Activated CD4-positive, alpha-beta memory T cell treated with anti-CD3 and anti-CD28 coated beads for 36 hours (primary cell): ENCODE measurements at regions of chr7 and their contacts with region 1.

Region 1: DNA sequence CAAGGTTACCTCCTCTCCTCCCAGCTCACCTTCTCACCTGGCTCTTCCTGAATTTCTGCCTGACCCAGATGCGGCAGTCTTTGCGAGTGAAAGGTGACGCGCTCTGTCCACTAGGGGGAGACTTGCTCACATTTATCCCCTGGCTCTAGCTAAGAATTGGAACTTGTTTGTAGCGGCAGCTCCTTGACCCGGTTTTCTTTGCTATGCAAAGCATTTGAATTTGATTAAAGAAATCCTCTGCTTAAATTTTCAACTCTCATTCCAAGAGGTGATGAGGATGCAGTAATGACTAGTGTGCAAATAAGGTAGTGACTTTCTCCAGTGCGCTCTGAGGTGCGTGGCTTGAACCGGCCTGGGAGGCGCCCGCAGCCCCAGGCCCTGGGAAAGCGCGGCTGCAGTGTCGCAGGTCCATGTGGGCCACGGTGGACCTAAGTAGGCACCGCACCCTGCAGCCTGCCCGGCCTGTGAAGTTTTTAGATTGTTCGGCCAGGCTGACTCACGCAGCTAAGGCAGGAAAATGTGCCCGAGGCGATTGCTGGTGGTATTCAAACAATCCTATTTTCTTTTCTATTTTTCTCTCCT is 336.9 kb upstream of the NPSR1 start:
- DNase-seq: peak; percentile 63
- H3K4me3 Mint-ChIP-seq: no peak overlapping the region
- H3K27ac Mint-ChIP-seq: no peak overlapping the region
- H3K4me1 Mint-ChIP-seq: peaks cover 2% of the 10 kb centered on the region
- H3K27me3 Mint-ChIP-seq: peaks cover 17% of the 10 kb centered on the region

Region 2: DNA sequence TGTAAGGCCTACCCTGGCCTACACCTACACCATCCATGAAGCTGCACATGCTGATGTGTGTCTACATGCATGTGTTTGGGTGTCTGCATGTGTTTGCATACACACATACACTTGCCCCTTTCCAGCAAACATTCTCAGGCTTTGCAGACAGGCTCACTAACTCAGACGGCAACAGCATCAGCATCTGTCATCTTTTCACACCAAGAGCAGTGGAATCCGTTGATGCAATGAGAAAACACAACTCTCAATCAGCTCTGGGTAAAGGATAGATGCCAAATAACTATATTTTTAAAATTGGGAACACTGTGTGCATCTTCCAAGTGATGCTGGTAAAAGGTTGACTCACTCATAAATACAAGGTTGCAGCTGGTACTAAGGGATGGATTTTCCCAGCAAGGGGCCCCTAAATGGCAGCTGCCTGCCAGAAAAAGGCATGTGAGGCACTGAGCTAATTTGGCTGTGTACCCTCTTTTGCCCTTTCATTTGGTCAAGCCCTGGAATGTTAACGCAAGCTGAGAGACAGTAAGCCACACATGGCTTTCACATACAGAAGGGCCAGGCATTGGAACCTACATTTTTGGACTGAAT is 40.7 kb after region 1 on chr7:
- CTCF ChIA-PET with region 1: no interaction called
- POLR2A ChIA-PET with region 1: no interaction called
- intact Hi-C with region 1: no loop called
- DNase-seq: no peak
- H3K4me3 Mint-ChIP-seq: no peak overlapping the region
- H3K27ac Mint-ChIP-seq: no peak overlapping the region
- H3K4me1 Mint-ChIP-seq: no peaks in the 10 kb centered on the region
- H3K27me3 Mint-ChIP-seq: no peaks in the 10 kb centered on the region

Region 3: GRCh38 chr7:34596892-34597291 is 275.8 kb after region 1 on chr7:
- CTCF ChIA-PET with region 1: no interaction called
- POLR2A ChIA-PET with region 1: no interaction called
- intact Hi-C with region 1: loop called (anchors 5 kb)
- DNase-seq: no peak
- H3K4me3 Mint-ChIP-seq: no peak overlapping the region
- H3K27ac Mint-ChIP-seq: no peak overlapping the region
- H3K4me1 Mint-ChIP-seq: no peaks in the 10 kb centered on the region
- H3K27me3 Mint-ChIP-seq: no peaks in the 10 kb centered on the region

Region 4: GRCh38 chr7:35537067-35538023 is 1216.3 kb after region 1 on chr7:
- CTCF ChIA-PET with region 1: no interaction called
- POLR2A ChIA-PET with region 1: no interaction called
- intact Hi-C with region 1: loop called (anchors 5 kb)
- DNase-seq: peak; percentile 80
- H3K4me3 Mint-ChIP-seq: peak overlapping the region; percentile 61
- H3K27ac Mint-ChIP-seq: no peak overlapping the region
- H3K4me1 Mint-ChIP-seq: peaks cover 2% of the 10 kb centered on the region
- H3K27me3 Mint-ChIP-seq: peaks cover 7% of the 10 kb centered on the region